B cell (primary cell): ENCODE measurements at regions of chr14 and their contacts with region 1.

Region 1: GRCh38 chr14:49633640-49634546 is 1.2 kb downstream of the DNAAF2 start:
- DNase-seq: peak; percentile 97
- ATAC-seq: peak; percentile 80
- H3K4me3 ChIP-seq: peak overlapping the region; percentile 80 to 98 (median 91)
- H3K4me3 Mint-ChIP-seq: peak overlapping the region; percentile 96
- H3K27ac ChIP-seq: peak overlapping the region; percentile 97 to 98
- H3K27ac Mint-ChIP-seq: peak overlapping the region; percentile 97
- H3K4me1 ChIP-seq: peaks cover 20 to 26% of the 10 kb centered on the region in 2 donors
- H3K4me1 Mint-ChIP-seq: peaks cover 47% of the 10 kb centered on the region
- H3K27me3 ChIP-seq: no peaks in the 10 kb centered on the region
- H3K27me3 Mint-ChIP-seq: no peaks in the 10 kb centered on the region
- CTCF ChIP-seq: peak; percentile 85

Region 2: DNA sequence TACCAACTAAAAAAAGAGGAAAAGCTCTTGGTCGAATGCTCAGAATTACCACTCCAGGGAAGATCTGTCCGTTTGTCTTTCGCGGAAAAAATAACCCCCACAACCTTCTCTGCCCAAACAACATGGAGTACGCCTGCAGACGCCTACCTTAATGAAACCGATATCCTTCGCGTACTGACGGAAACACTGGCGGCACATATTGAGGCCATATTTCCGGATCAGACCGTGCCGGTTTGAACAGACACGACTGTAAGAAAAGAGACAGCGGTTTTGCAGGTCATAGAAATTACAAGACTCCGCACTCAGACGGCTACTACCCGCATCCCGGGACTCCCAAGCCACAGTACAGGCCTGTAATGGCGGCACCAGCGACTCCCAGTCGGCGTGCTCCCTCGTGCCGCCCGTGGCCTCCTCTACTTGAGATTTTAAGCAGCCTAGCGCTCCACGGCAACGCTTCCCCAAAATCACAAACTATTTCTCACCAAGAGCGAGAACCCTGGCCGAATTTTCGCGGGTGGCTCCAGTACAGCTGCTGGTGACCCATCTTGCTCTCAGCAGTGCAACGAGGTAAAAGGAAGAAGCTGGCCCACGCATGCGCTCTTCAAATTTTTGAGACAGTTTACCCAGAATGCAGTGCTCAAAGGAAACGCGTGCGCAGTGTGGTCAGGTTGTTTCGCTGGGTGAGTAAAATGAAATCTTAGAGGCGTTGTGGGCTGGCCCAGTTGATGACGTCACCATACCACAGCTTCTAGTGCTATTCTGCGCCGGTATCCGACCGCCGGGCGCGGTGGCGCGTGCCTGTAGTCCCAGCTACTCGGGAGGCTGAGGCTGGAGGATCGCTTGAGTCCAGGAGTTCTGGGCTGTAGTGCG is 47.9 kb before region 1 on chr14 and contains the start of gene RPS29:
- CTCF ChIA-PET with region 1: interaction called, 19 read pairs
- POLR2A ChIA-PET with region 1: interaction called, 25 read pairs
- intact Hi-C with region 1: loop called (anchors 1 kb)
- DNase-seq: peak; percentile 100
- ATAC-seq: peak; percentile 86
- H3K4me3 ChIP-seq: peak within 1 kb of the TSS; percentile 70 to 100 (median 88)
- H3K4me3 Mint-ChIP-seq: peak within 1 kb of the TSS; percentile 88
- H3K27ac ChIP-seq: peak within 1 kb of the TSS; percentile 88 to 95
- H3K27ac Mint-ChIP-seq: peak within 1 kb of the TSS; percentile 100
- H3K4me1 ChIP-seq: peaks cover 17 to 24% of the 10 kb centered on the region in 2 donors
- H3K4me1 Mint-ChIP-seq: peaks cover 46% of the 10 kb centered on the region
- H3K27me3 ChIP-seq: no peaks in the 10 kb centered on the region
- H3K27me3 Mint-ChIP-seq: no peaks in the 10 kb centered on the region
- CTCF ChIP-seq: no peak
- total RNA-seq, gene RPS29: 2,497 and 2,873 TPM in 2 replicates

Region 3: GRCh38 chr14:49598485-49599300 is 35.2 kb before region 1 on chr14 and contains the start of gene LRR1:
- CTCF ChIA-PET with region 1: interaction called, 10 read pairs
- POLR2A ChIA-PET with region 1: interaction called, 18 read pairs
- intact Hi-C with region 1: loop called (anchors 1 kb)
- DNase-seq: peak; percentile 95
- ATAC-seq: peak; percentile 73
- H3K4me3 ChIP-seq: peak within 1 kb of the TSS; percentile 75 to 94 (median 80)
- H3K4me3 Mint-ChIP-seq: peak within 1 kb of the TSS; percentile 99
- H3K27ac ChIP-seq: peak within 1 kb of the TSS; percentile 92 to 97
- H3K27ac Mint-ChIP-seq: peak within 1 kb of the TSS; percentile 98
- H3K4me1 ChIP-seq: peaks cover 33 to 42% of the 10 kb centered on the region in 2 donors
- H3K4me1 Mint-ChIP-seq: peaks cover 55% of the 10 kb centered on the region
- H3K27me3 ChIP-seq: no peaks in the 10 kb centered on the region
- H3K27me3 Mint-ChIP-seq: no peaks in the 10 kb centered on the region
- CTCF ChIP-seq: no peak
- total RNA-seq, gene LRR1: 10.3 and 13.0 TPM in 2 replicates

Region 4: GRCh38 chr14:49692811-49693734 is 59.2 kb after region 1 on chr14 and contains the start of gene KLHDC1:
- CTCF ChIA-PET with region 1: interaction called, 7 read pairs
- POLR2A ChIA-PET with region 1: interaction called, 4 read pairs
- intact Hi-C with region 1: loop called (anchors 1 kb)
- DNase-seq: peak; percentile 85
- ATAC-seq: peak; percentile 78
- H3K4me3 ChIP-seq: peak within 1 kb of the TSS; percentile 44 to 74 (median 72)
- H3K4me3 Mint-ChIP-seq: peak within 1 kb of the TSS; percentile 92
- H3K27ac ChIP-seq: peak within 1 kb of the TSS; percentile 47 to 83
- H3K27ac Mint-ChIP-seq: peak within 1 kb of the TSS; percentile 87
- H3K4me1 ChIP-seq: peaks cover 9 to 11% of the 10 kb centered on the region in 2 donors
- H3K4me1 Mint-ChIP-seq: peaks cover 23% of the 10 kb centered on the region
- H3K27me3 ChIP-seq: no peaks in the 10 kb centered on the region
- H3K27me3 Mint-ChIP-seq: no peaks in the 10 kb centered on the region
- CTCF ChIP-seq: no peak
- total RNA-seq, gene KLHDC1: 11.7 and 13.7 TPM in 2 replicates

Region 5: DNA sequence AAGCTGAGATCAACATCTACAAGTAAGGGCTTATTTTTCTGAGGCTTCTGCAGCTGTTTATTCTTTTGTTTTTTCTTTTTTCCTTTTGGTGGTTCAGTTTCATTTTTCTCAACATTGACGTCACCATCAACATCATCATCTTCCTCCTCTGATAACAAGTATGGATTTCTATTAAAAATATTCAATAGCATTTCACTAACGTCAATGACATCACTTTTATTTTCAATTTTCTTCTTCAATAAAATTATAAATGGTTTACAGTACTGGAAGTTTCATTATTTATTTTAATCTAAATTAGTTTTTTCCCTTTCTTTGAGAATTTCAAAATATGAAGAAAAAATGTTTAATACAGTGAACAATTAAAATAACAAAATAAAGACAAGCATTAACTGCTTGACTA is 194.7 kb after region 1 on chr14:
- CTCF ChIA-PET with region 1: interaction called, 12 read pairs
- POLR2A ChIA-PET with region 1: interaction called, 11 read pairs
- intact Hi-C with region 1: loop called (anchors 1 kb)
- DNase-seq: no peak
- ATAC-seq: no peak
- H3K4me3 ChIP-seq: no peak overlapping the region
- H3K4me3 Mint-ChIP-seq: no peak overlapping the region
- H3K27ac ChIP-seq: no peak overlapping the region
- H3K27ac Mint-ChIP-seq: no peak overlapping the region
- H3K4me1 ChIP-seq: no peaks in the 10 kb centered on the region
- H3K4me1 Mint-ChIP-seq: peaks cover 3% of the 10 kb centered on the region
- H3K27me3 ChIP-seq: no peaks in the 10 kb centered on the region
- H3K27me3 Mint-ChIP-seq: no peaks in the 10 kb centered on the region
- CTCF ChIP-seq: no peak

Region 6: GRCh38 chr14:50116181-50116956 is 482.5 kb after region 1 on chr14 and contains the start of gene VCPKMT:
- CTCF ChIA-PET with region 1: interaction called, 5 read pairs
- POLR2A ChIA-PET with region 1: no interaction called
- intact Hi-C with region 1: loop called (anchors 1 kb)
- DNase-seq: peak; percentile 97
- ATAC-seq: peak; percentile 97
- H3K4me3 ChIP-seq: peak within 1 kb of the TSS; percentile 69 to 92 (median 87)
- H3K4me3 Mint-ChIP-seq: peak within 1 kb of the TSS; percentile 98
- H3K27ac ChIP-seq: peak within 1 kb of the TSS; percentile 92 to 99
- H3K27ac Mint-ChIP-seq: peak within 1 kb of the TSS; percentile 98
- H3K4me1 ChIP-seq: peaks cover 44 to 45% of the 10 kb centered on the region in 2 donors
- H3K4me1 Mint-ChIP-seq: peaks cover 45% of the 10 kb centered on the region
- H3K27me3 ChIP-seq: no peaks in the 10 kb centered on the region
- H3K27me3 Mint-ChIP-seq: no peaks in the 10 kb centered on the region
- CTCF ChIP-seq: no peak
- total RNA-seq, gene VCPKMT: 22.8 and 27.1 TPM in 2 replicates

Region 7: DNA sequence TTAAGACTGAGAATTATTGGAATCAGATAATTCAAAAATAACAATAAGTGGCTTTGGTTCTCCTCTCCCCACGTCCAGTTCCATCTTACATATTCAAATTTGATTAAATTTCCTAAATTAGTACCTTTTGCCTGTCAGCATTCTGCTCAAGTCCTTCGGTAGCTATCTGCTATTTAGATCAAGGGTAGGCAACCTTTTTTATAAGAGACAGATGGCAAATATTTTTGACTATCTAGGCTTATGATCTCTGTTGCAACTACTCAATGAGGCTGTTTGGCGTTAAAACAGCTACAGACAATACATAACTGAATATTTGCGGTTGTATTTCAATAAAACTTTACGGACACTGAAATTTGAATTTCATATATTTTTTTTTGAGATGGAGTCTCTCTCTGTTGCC is 656.4 kb after region 1 on chr14:
- CTCF ChIA-PET with region 1: no interaction called
- POLR2A ChIA-PET with region 1: no interaction called
- intact Hi-C with region 1: no loop called
- DNase-seq: no peak
- ATAC-seq: no peak
- H3K4me3 ChIP-seq: no peak overlapping the region
- H3K4me3 Mint-ChIP-seq: no peak overlapping the region
- H3K27ac ChIP-seq: no peak overlapping the region
- H3K27ac Mint-ChIP-seq: no peak overlapping the region
- H3K4me1 ChIP-seq: no peaks in the 10 kb centered on the region
- H3K4me1 Mint-ChIP-seq: no peaks in the 10 kb centered on the region
- H3K27me3 ChIP-seq: no peaks in the 10 kb centered on the region
- H3K27me3 Mint-ChIP-seq: no peaks in the 10 kb centered on the region
- CTCF ChIP-seq: no peak

Region 8: DNA sequence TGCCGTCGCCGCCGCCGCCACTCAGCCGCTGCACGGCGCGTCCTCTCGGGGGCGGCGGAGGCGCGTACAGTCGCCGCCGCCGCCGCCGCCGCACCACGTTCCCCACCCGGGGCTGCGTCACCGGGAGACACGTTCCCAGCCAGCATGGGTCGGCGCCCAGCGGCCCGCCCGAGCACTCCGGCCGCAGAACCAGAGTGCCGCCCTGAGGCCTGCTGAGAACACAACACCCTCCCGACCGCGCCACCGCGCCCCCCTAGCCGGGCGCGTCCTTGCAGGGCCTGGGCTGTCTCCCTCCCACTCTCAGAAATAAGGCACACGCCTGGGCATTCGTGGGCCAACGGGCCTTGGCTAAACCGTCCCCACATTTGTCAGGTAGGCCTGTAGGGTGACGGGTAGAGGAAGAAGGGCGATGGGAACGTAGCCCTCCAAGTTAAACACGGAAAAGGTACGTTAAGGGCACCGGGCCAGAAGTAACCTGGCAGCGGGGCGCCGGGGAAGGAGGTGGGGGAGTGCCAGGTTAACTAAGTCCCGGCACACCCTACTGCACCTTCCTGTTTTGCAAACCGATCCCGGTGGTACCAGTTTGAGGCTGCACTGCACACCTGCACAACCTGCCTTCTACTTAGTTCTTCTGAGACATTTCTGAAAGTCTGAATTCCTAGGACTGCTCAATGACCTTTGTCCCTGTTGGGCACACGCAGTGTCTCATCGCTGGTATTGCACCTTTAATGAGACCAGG is 898.8 kb after region 1 on chr14 and contains the start of gene MAP4K5:
- CTCF ChIA-PET with region 1: no interaction called
- POLR2A ChIA-PET with region 1: no interaction called
- intact Hi-C with region 1: loop called (anchors 1 kb)
- DNase-seq: peak; percentile 94
- ATAC-seq: peak; percentile 91
- H3K4me3 ChIP-seq: peak within 1 kb of the TSS; percentile 62 to 89 (median 76)
- H3K4me3 Mint-ChIP-seq: peak within 1 kb of the TSS; percentile 93
- H3K27ac ChIP-seq: peak within 1 kb of the TSS; percentile 83 to 88
- H3K27ac Mint-ChIP-seq: peak within 1 kb of the TSS; percentile 95
- H3K4me1 ChIP-seq: peaks cover 18 to 37% of the 10 kb centered on the region in 2 donors
- H3K4me1 Mint-ChIP-seq: peaks cover 47% of the 10 kb centered on the region
- H3K27me3 ChIP-seq: no peaks in the 10 kb centered on the region
- H3K27me3 Mint-ChIP-seq: no peaks in the 10 kb centered on the region
- CTCF ChIP-seq: peak; percentile 79
- total RNA-seq, gene MAP4K5: 58.2 and 60.0 TPM in 2 replicates